AG04449 (cell line): ENCODE measurements at regions of chr12 and their contacts with region 1.

Region 1: GRCh38 chr12:108803428-108804105 is 53.8 kb downstream of the SSH1 start:
- DNase-seq: peak; percentile 83
- H3K4me3 ChIP-seq: no peak overlapping the region
- CTCF ChIP-seq: peak; percentile 83

Region 2: DNA sequence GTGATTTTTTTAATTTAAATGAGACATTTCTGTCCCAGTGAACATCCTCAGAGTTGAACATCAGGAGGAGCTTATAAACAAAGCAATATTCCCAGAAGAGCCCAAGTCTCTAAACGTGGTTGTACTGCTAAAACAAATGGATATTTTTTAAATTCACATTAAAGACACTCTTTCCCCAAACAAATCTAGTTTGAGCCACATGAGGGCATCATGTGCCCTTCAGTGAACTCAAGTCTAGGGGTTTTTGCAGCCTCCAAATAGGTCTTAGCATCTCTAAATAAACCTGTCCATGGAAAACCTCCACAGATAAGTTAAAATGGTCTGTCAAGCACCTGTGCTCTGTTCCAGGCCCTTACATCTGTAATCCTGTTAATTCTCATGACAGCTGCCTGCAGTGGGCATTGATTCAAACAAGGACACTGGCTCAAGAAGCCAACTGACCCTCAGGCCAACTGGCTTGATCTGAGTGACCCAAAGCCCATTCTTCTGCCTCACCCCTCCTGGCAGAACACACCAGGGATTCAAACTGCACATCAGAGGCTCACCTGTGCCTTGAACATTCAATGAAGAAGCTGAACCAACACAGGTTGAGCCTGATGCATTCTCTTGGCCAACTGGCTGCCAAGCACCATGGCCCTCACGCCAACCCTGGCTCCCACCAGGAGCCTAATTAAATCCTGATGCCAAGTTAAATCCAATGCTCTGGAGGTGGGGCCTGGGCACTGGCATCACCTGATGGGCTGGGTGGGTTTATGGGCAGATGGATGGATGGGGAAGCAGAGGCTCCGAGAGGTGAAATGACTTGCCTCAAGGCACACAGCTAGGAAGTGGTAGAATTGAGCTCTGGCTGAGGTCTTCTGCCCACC is 232.6 kb before region 1 on chr12:
- CTCF ChIA-PET with region 1: interaction called, 44 read pairs
- POLR2A ChIA-PET with region 1: no interaction called
- DNase-seq: no peak
- H3K4me3 ChIP-seq: no peak overlapping the region
- CTCF ChIP-seq: peak; percentile 37

Region 3: GRCh38 chr12:108633534-108634248 is 169.9 kb before region 1 on chr12 and contains the start of gene SELPLG:
- CTCF ChIA-PET with region 1: interaction called, 24 read pairs
- POLR2A ChIA-PET with region 1: interaction called, 3 read pairs
- DNase-seq: no peak
- H3K4me3 ChIP-seq: no peak within 1 kb of the TSS
- CTCF ChIP-seq: no peak

Region 4: DNA sequence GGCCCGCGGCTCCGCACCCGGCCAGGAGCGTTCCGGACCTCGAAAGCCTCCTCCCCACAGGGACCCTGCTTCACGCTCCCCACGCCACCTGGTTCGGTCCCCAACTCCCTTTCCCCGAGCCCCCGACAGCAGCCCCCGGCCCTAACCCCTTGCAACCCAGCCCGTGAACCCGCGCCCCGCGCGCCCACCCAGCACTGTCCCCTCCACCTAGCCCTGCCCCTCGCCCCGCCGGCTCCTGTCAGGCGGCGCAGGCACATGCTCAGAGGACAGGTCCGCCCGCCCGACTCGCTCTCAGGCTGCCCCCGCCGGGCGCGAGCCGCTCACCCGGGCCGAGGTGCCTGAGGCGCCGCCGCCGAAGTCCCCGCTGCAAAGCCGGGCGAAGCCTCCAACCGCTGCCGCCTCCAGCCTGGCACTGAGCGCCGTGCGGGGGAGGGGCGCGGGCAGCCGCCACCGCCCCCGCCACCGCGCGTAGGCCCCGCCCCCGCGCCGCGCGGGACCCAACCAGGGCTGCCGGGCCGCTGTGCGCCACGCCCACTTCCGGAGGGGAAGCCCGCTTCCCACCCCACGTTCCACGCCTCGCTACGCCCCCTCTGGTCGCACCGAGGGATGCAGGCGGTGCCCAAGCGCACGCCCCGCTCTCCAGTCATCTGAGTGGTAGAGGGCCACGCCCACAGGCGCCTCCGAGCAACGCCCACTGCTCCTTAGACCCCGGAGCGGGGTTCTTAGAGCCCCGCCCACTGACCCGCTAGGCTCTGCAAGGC is 72.3 kb before region 1 on chr12 and contains the start of gene CORO1C:
- CTCF ChIA-PET with region 1: interaction called, 12 read pairs
- POLR2A ChIA-PET with region 1: interaction called, 4 read pairs
- DNase-seq: no peak
- H3K4me3 ChIP-seq: peak within 1 kb of the TSS; percentile 99
- CTCF ChIP-seq: peak; percentile 99

Region 5: GRCh38 chr12:108833355-108833733 is 29.8 kb after region 1 on chr12:
- CTCF ChIA-PET with region 1: interaction called, 22 read pairs
- POLR2A ChIA-PET with region 1: interaction called, 9 read pairs
- DNase-seq: peak; percentile 87
- H3K4me3 ChIP-seq: peak overlapping the region; percentile 3
- CTCF ChIP-seq: no peak

Region 6: GRCh38 chr12:108950991-108951739 is 147.6 kb after region 1 on chr12:
- CTCF ChIA-PET with region 1: interaction called, 38 read pairs
- POLR2A ChIA-PET with region 1: interaction called, 3 read pairs
- DNase-seq: no peak
- H3K4me3 ChIP-seq: no peak overlapping the region
- CTCF ChIP-seq: peak; percentile 72